Activated CD8-positive, alpha-beta T cell treated with anti-CD3 and anti-CD28 coated beads for 36 hours (primary cell): ENCODE measurements at regions of chr6 and their contacts with region 1.

Region 1: GRCh38 chr6:31769684-31770371 is 7.3 kb downstream of the VWA7 start:
- DNase-seq: peak; percentile 90
- ATAC-seq: peak; percentile 87
- H3K4me3 Mint-ChIP-seq: no peak overlapping the region
- H3K27ac Mint-ChIP-seq: no peak overlapping the region
- H3K4me1 Mint-ChIP-seq: peaks cover 26% of the 10 kb centered on the region
- H3K27me3 Mint-ChIP-seq: no peaks in the 10 kb centered on the region
- CTCF ChIP-seq: peak; percentile 84

Region 2: GRCh38 chr6:31356946-31357466 is 412.8 kb before region 1 on chr6 and contains the start of gene HLA-B:
- CTCF ChIA-PET with region 1: no interaction called
- POLR2A ChIA-PET with region 1: no interaction called
- intact Hi-C with region 1: no loop called
- DNase-seq: peak; percentile 90
- ATAC-seq: peak; percentile 84
- H3K4me3 Mint-ChIP-seq: peak within 1 kb of the TSS; percentile 90
- H3K27ac Mint-ChIP-seq: peak within 1 kb of the TSS; percentile 100
- H3K4me1 Mint-ChIP-seq: peaks cover 45% of the 10 kb centered on the region
- H3K27me3 Mint-ChIP-seq: no peaks in the 10 kb centered on the region
- CTCF ChIP-seq: no peak
- total RNA-seq, gene HLA-B: 2,892 to 2,968 TPM

Region 3: GRCh38 chr6:31739639-31740396 is 30.0 kb before region 1 on chr6 and contains the start of gene MSH5:
- CTCF ChIA-PET with region 1: interaction called, 59 read pairs
- POLR2A ChIA-PET with region 1: interaction called, 7 read pairs
- intact Hi-C with region 1: no loop called
- DNase-seq: peak; percentile 99
- ATAC-seq: peak; percentile 83
- H3K4me3 Mint-ChIP-seq: peak within 1 kb of the TSS; percentile 97
- H3K27ac Mint-ChIP-seq: peak within 1 kb of the TSS; percentile 97
- H3K4me1 Mint-ChIP-seq: peaks cover 38% of the 10 kb centered on the region
- H3K27me3 Mint-ChIP-seq: no peaks in the 10 kb centered on the region
- CTCF ChIP-seq: no peak
- total RNA-seq, gene MSH5: 96.9 to 105 TPM

Region 4: GRCh38 chr6:31758281-31758680 is 11.5 kb before region 1 on chr6:
- CTCF ChIA-PET with region 1: interaction called, 11 read pairs
- POLR2A ChIA-PET with region 1: interaction called, 7 read pairs
- intact Hi-C with region 1: no loop called
- DNase-seq: no peak
- ATAC-seq: no peak
- H3K4me3 Mint-ChIP-seq: no peak overlapping the region
- H3K27ac Mint-ChIP-seq: no peak overlapping the region
- H3K4me1 Mint-ChIP-seq: no peaks in the 10 kb centered on the region
- H3K27me3 Mint-ChIP-seq: no peaks in the 10 kb centered on the region
- CTCF ChIP-seq: no peak

Region 5: DNA sequence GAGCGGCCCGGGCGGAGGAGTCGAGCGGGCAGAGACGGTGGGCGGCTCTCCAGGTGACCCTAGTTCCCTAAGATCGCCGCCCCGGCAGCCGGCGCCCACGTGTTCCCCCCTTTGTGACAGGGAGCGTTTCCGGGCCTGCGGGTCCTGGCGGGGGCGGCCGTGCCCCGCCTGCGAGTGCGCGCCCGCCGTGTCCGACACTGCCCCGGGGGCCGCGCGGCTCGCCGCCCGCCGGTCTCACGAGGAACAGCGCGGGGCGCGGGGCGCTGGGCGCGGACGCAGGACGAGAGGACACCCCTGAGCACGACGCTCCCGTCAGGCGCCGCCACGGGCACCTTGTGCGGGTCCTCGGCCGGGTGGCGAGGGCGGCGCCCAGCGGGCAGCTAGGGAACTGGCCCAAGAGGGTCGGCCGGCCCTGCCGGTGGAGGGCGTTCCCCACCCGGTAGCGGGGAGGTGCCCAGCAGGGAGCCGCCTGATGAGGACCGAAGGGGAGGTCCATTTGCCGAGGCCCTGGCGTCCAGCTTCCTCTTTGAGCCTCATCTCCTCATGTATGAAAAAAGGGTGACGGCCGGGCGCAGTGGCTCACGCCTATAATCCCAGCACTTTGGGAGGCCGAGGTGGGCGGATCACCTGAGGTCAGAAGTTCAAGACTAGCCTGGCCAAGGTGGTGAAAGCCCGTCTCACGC is 25.9 kb after region 1 on chr6 and contains the start of gene VARS1:
- CTCF ChIA-PET with region 1: interaction called, 19 read pairs
- POLR2A ChIA-PET with region 1: interaction called, 6 read pairs
- intact Hi-C with region 1: no loop called
- DNase-seq: peak; percentile 86
- ATAC-seq: peak; percentile 92
- H3K4me3 Mint-ChIP-seq: peak within 1 kb of the TSS; percentile 92
- H3K27ac Mint-ChIP-seq: peak within 1 kb of the TSS; percentile 97
- H3K4me1 Mint-ChIP-seq: peaks cover 39% of the 10 kb centered on the region
- H3K27me3 Mint-ChIP-seq: no peaks in the 10 kb centered on the region
- CTCF ChIP-seq: peak; percentile 78
- total RNA-seq, gene VARS1: 150 to 153 TPM

Region 6: GRCh38 chr6:31815025-31815838 is 45.4 kb after region 1 on chr6 and contains the starts of genes HSPA1A and HSPA1L:
- CTCF ChIA-PET with region 1: interaction called, 16 read pairs
- POLR2A ChIA-PET with region 1: no interaction called
- intact Hi-C with region 1: no loop called
- DNase-seq: peak; percentile 67
- ATAC-seq: peak; percentile 28
- H3K4me3 Mint-ChIP-seq: peak within 1 kb of the TSS; percentile 85
- H3K27ac Mint-ChIP-seq: peak within 1 kb of the TSS; percentile 92
- H3K4me1 Mint-ChIP-seq: peaks cover 41% of the 10 kb centered on the region
- H3K27me3 Mint-ChIP-seq: no peaks in the 10 kb centered on the region
- CTCF ChIP-seq: no peak
- total RNA-seq, gene HSPA1A: 36.6 to 37.8 TPM
- total RNA-seq, gene HSPA1L: 1.7 to 2.0 TPM

Region 7: GRCh38 chr6:31920811-31921210 is 151.0 kb after region 1 on chr6:
- CTCF ChIA-PET with region 1: no interaction called
- POLR2A ChIA-PET with region 1: no interaction called
- intact Hi-C with region 1: no loop called
- DNase-seq: no peak
- ATAC-seq: no peak
- H3K4me3 Mint-ChIP-seq: no peak overlapping the region
- H3K27ac Mint-ChIP-seq: no peak overlapping the region
- H3K4me1 Mint-ChIP-seq: no peaks in the 10 kb centered on the region
- H3K27me3 Mint-ChIP-seq: peaks cover 3% of the 10 kb centered on the region
- CTCF ChIP-seq: no peak